Activated CD4-positive, alpha-beta memory T cell treated with anti-CD3 and anti-CD28 coated beads for 36 hours (primary cell): ENCODE measurements at regions of chr2 and their contacts with region 1.

Region 1: GRCh38 chr2:201532686-201533304 is 81.3 kb downstream of the STRADB start:
- DNase-seq: peak; percentile 13
- H3K4me3 Mint-ChIP-seq: no peak overlapping the region
- H3K27ac Mint-ChIP-seq: peak overlapping the region; percentile 77
- H3K4me1 Mint-ChIP-seq: peaks cover 20% of the 10 kb centered on the region
- H3K27me3 Mint-ChIP-seq: no peaks in the 10 kb centered on the region

Region 2: GRCh38 chr2:201414099-201415023 is 118.4 kb before region 1 on chr2:
- CTCF ChIA-PET with region 1: no interaction called
- POLR2A ChIA-PET with region 1: no interaction called
- intact Hi-C with region 1: loop called (anchors 5 kb)
- DNase-seq: no peak
- H3K4me3 Mint-ChIP-seq: no peak overlapping the region
- H3K27ac Mint-ChIP-seq: no peak overlapping the region
- H3K4me1 Mint-ChIP-seq: peaks cover 29% of the 10 kb centered on the region
- H3K27me3 Mint-ChIP-seq: no peaks in the 10 kb centered on the region

Region 3: DNA sequence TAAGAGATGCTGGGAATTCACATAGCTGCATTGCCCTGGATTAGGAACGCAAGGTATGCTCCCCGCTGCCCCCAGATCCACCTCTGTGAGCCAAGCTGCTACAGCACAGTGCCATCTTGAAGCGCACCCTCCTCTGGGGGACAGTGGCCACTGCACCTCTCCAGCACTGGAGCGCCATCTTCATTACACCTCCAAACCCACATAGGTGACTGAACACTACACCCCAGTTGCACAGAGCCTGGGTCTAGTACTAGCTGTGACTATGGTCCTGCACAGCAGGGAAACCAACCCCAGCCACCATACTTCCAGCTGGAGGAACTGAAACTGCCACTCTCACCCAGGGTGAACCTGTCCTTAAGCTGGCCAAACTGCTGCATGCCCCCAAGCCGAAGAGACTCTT is 25.9 kb after region 1 on chr2:
- CTCF ChIA-PET with region 1: no interaction called
- POLR2A ChIA-PET with region 1: no interaction called
- intact Hi-C with region 1: no loop called
- DNase-seq: no peak
- H3K4me3 Mint-ChIP-seq: no peak overlapping the region
- H3K27ac Mint-ChIP-seq: no peak overlapping the region
- H3K4me1 Mint-ChIP-seq: no peaks in the 10 kb centered on the region
- H3K27me3 Mint-ChIP-seq: no peaks in the 10 kb centered on the region

Region 4: DNA sequence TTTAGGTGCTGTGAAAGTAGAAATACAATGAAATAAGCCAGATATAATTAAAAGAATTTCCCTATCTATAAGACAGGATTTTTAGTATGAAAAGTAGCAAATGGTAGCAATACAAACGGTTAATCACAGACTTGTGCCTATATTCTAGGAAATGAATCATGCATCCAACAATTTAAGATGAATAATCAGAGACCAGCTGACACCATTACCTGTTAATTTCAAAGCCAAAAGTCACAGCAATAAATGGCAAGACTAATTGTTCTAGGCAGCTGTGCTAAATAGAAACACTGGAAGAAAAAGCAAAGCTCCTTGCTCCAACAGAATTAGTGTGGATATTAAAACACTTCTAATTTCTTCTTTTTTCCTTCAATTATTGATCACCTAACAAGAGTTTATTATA is 200.7 kb after region 1 on chr2:
- CTCF ChIA-PET with region 1: no interaction called
- POLR2A ChIA-PET with region 1: no interaction called
- intact Hi-C with region 1: loop called (anchors 5 kb)
- DNase-seq: no peak
- H3K4me3 Mint-ChIP-seq: no peak overlapping the region
- H3K27ac Mint-ChIP-seq: no peak overlapping the region
- H3K4me1 Mint-ChIP-seq: peaks cover 8% of the 10 kb centered on the region
- H3K27me3 Mint-ChIP-seq: no peaks in the 10 kb centered on the region